Posterior vena cava (tissue), 2 donors: ENCODE measurements at regions of chr4 and their contacts with region 1.

Region 1: GRCh38 chr4:110830461-110830860 is 207.6 kb upstream of the PITX2 start:
- DNase-seq: no peak

Region 2: GRCh38 chr4:110778521-110778920 is 51.9 kb before region 1 on chr4:
- intact Hi-C with region 1: no loop called
- DNase-seq: no peak

Region 3: GRCh38 chr4:111519683-111520082 is 689.2 kb after region 1 on chr4:
- intact Hi-C with region 1: loop called in 1 of 2 experiments (anchors 5 kb)
- DNase-seq: no peak